Mammary epithelial cell (primary cell): ENCODE measurements at regions of chr9 and their contacts with region 1.

Region 1: DNA sequence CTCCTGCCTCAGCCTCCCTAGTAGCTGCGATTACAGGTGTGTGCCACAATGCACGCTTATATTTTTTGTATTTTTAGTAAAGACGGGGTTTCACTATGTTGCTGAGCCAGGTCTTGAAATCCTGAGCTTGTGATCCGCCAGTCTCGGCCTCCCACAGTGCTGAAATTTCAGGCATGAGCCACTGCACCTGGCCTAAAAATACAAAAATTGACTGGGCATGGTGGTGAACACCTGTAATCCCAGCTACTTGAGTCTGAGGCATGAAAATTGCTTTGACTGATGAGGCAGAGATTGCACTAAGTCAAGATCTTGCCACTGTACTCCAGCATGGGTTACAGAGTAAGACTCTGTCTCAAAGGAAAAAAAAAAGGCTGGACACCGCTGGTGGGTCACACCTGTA is 13.1 kb upstream of the DYNC2I2 start:
- DNase-seq: no peak
- H3K4me3 ChIP-seq: no peak overlapping the region
- H3K27ac ChIP-seq: no peak overlapping the region
- H3K4me1 ChIP-seq: peaks cover 5% of the 10 kb centered on the region
- H3K27me3 ChIP-seq: no peaks in the 10 kb centered on the region
- CTCF ChIP-seq: no peak

Region 2: DNA sequence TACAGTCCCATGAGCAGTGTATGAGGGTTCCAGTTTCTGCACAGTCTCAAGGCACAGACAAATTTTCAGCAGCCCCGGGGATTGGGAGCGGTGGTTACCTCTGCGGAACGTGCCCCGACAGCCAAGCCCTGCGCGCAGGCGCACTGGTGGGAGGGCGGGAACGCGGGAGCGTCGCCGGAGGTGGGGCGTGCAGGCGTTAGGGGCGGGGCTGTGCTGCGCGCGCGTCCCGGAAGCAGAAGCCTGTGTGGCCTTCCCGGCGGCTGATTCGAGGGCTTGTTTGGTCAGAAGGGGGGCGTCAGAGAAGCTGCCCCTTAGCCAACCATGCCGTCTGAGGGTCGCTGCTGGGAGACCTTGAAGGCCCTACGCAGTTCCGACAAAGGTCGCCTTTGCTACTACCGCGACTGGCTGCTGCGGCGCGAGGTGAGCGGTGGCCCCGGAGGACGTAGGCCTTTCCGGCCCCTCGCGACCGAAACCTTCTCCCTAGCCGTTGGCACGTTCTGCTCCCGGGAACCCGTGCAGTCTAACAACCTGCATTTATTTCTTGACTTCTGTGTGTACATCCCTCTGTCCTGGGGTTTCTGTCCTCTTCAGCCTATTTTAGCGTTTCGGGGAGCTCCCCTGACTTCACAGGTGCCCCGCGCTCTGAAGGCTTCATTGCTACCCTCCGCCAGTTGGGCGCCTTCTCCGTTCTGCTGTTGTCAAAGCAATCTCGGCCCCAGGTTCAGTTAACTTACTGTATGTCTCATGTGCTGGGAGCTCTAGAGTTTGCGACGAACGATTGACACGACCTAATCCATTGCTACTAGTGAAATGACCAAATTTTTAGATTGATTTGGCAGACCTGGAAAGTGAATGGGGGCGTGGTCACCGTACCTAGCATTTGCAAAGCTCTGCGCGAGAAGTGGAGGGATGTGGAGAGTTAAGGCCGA is 165.0 kb before region 1 on chr9 and contains the start of gene GLE1:
- CTCF ChIA-PET with region 1: no interaction called
- dilution Hi-C with region 1: no loop called
- in situ Hi-C with region 1: no loop called
- intact Hi-C with region 1: no loop called
- DNase-seq: peak; percentile 90
- H3K4me3 ChIP-seq: peak within 1 kb of the TSS; percentile 86 to 95 (median 91)
- H3K27ac ChIP-seq: peak within 1 kb of the TSS; percentile 83
- H3K4me1 ChIP-seq: peaks cover 27% of the 10 kb centered on the region
- H3K27me3 ChIP-seq: no peaks in the 10 kb centered on the region
- CTCF ChIP-seq: no peak
- total RNA-seq, gene GLE1: 19.7 to 28.8 TPM

Region 3: DNA sequence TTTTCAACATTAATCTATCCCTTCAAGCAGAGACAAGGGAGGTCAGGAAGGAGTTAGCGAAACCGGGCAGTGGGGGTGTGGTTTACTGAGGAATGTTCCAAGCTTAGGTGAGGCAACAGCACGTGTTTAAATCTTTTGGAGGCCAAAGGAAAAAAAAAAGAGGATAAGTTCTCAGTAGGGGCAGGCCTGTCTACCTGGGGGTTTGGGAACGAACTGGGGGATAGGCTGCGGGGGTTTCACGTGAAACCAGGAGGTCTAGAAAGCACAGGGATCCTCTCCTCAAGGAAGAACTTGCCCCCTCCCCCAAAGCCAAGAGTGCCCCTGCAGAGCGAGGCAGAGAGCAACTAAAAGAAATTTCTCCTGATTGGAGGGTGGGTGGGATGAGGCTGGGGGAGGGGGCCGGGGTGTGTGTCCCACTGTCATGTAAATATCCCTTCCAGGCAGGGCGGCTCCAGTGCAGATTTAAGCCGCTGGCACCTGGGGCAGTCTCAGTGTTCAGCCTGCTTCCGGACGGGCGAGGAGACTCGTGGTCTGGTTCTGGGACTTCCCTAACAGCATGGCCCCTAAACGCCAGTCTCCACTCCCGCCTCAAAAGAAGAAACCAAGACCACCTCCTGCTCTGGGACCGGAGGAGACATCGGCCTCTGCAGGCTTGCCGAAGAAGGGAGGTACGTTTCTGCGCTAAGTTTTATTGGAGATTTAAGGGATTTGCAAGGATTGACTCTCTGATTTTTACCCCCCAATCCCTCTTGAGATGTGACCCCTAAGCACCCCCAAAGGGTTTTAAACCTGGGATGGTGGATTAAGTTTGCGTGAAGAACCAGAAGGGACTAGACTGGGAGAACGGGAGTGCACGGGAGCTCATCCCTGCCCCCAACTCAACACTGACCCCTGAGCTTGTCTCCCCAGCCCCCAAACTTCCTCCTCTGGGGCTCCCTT is 13.8 kb after region 1 on chr9:
- CTCF ChIA-PET with region 1: no interaction called
- dilution Hi-C with region 1: no loop called
- in situ Hi-C with region 1: no loop called
- intact Hi-C with region 1: loop called (anchors 2 kb)
- DNase-seq: peak; percentile 86
- H3K4me3 ChIP-seq: peak overlapping the region; percentile 73 to 80 (median 78)
- H3K27ac ChIP-seq: peak overlapping the region; percentile 96
- H3K4me1 ChIP-seq: peaks cover 29% of the 10 kb centered on the region
- H3K27me3 ChIP-seq: no peaks in the 10 kb centered on the region
- CTCF ChIP-seq: no peak